Naive thymus-derived CD4-positive, alpha-beta T cell (primary cell): ENCODE measurements at regions of chr4 and their contacts with region 1.

Region 1: GRCh38 chr4:674172-675035 is at the starts of genes ATP5ME and MYL5:
- DNase-seq: peak; percentile 97 to 100 (median 99)
- ATAC-seq: peak; percentile 96
- H3K4me3 ChIP-seq: peak within 1 kb of the TSS; percentile 88
- H3K4me3 Mint-ChIP-seq: peak within 1 kb of the TSS; percentile 84 to 92 (median 88)
- H3K27ac ChIP-seq: peak within 1 kb of the TSS; percentile 100
- H3K27ac Mint-ChIP-seq: peak within 1 kb of the TSS; percentile 80 to 91 (median 89)
- H3K4me1 ChIP-seq: peaks cover 7 to 16% of the 10 kb centered on the region in 2 donors
- H3K4me1 Mint-ChIP-seq: peaks cover 7 to 15% (median 8%) of the 10 kb centered on the region in 7 donors
- H3K27me3 ChIP-seq: no peaks in the 10 kb centered on the region
- H3K27me3 Mint-ChIP-seq: no peaks in the 10 kb centered on the region
- total RNA-seq, gene ATP5ME: 115 to 183 (median 123) TPM
- total RNA-seq, gene MYL5: 19.9 to 32.7 (median 23.8) TPM

Region 2: DNA sequence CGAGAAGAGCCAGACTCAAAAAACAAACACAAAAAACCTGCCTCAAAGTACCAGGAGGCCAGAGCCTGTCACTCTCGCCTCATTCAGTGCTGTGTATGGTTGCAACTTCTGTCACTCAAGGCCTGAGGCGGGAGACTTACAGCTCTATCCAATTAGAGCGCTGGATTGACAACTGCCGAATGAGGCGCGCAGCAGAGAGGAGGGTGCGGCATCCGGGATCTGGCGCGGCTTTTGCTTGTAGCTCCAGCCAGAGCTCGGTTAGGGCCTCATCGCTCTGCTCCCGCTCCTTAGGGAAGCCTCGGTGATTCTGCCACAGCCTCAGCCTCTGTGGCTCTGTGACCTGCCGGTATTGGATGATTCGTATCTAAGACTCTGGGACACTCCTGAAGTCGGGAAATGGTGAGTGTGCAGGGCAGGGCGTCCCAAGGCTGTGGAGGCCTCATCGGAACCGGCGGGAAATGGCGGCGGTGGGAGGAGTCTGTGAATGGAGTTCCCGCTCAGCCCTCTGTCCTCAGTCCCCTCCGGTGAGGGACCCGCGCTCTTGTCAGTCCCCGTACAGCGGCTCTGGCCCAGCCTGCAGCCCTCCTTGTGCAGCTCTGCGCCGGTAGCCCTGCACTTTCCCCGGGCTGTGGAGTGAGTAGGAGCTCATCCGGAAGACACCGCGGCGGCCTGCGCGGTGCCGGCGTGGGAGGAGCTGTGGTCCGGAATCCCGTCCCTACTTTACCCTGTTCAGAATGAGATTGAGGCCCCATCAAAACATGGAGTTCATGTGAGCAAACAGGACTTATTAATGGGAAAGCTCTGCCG is 549.9 kb before region 1 on chr4 and contains the start of gene ZNF718:
- CTCF ChIA-PET with region 1: no interaction called
- POLR2A ChIA-PET with region 1: interaction called, 3 read pairs
- intact Hi-C with region 1: loop called (anchors 5 kb)
- DNase-seq: peak; percentile 17 to 94 (median 90)
- ATAC-seq: peak; percentile 93
- H3K4me3 ChIP-seq: peak within 1 kb of the TSS; percentile 89
- H3K4me3 Mint-ChIP-seq: peak within 1 kb of the TSS; percentile 91 to 100 (median 98)
- H3K27ac ChIP-seq: peak within 1 kb of the TSS; percentile 94
- H3K27ac Mint-ChIP-seq: peak within 1 kb of the TSS; percentile 93 to 100 (median 99)
- H3K4me1 ChIP-seq: peaks cover 22 to 30% of the 10 kb centered on the region in 2 donors
- H3K4me1 Mint-ChIP-seq: peaks cover 21 to 52% (median 42%) of the 10 kb centered on the region in 7 donors
- H3K27me3 ChIP-seq: no peaks in the 10 kb centered on the region
- H3K27me3 Mint-ChIP-seq: no peaks in the 10 kb centered on the region
- total RNA-seq, gene ZNF718: 2.4 to 12.3 (median 10.0) TPM

Region 3: GRCh38 chr4:337143-337931 is 337.1 kb before region 1 on chr4 and contains the start of gene ZNF141:
- CTCF ChIA-PET with region 1: no interaction called
- POLR2A ChIA-PET with region 1: interaction called, 4 read pairs
- intact Hi-C with region 1: loop called (anchors 1 to 2 kb)
- DNase-seq: peak; percentile 74 to 95 (median 93)
- ATAC-seq: peak; percentile 93
- H3K4me3 ChIP-seq: peak within 1 kb of the TSS; percentile 91
- H3K4me3 Mint-ChIP-seq: peak within 1 kb of the TSS; percentile 93 to 100 (median 99)
- H3K27ac ChIP-seq: peak within 1 kb of the TSS; percentile 85
- H3K27ac Mint-ChIP-seq: peak within 1 kb of the TSS; percentile 95 to 100 (median 99)
- H3K4me1 ChIP-seq: peaks cover 9 to 10% of the 10 kb centered on the region in 2 donors
- H3K4me1 Mint-ChIP-seq: peaks cover 11 to 46% (median 41%) of the 10 kb centered on the region in 7 donors
- H3K27me3 ChIP-seq: no peaks in the 10 kb centered on the region
- H3K27me3 Mint-ChIP-seq: peaks cover 0 to 6% (median 0%) of the 10 kb centered on the region in 5 donors
- total RNA-seq, gene ZNF141: 19.7 to 76.1 (median 29.0) TPM

Region 4: DNA sequence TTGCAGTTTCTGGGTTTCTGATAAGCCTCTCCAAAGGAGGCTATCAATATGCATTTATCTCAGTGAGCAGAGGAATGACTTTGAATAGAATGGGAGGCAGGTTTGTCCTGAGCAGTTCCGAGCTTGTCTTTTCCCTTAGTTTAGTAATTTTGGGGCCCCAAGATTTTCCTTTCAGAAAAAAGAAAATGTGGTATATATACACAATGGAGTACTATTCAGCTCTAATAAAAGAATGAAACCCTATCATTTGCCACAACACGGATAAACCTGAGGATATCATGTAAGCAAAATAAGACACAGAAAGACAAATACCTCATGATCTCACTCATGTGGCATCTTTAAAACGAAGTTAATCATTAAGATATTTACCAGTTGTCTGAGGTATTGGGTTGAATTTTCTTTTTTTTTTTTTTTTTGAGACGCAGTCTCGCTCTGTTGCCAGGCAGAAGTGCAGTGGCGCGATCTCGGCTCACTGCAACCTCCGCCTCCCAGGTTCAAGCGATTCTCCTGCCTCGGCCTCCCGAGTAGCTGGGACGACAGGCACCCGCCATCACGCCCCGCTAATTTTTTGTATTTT is 176.0 kb before region 1 on chr4:
- CTCF ChIA-PET with region 1: no interaction called
- POLR2A ChIA-PET with region 1: interaction called, 3 read pairs
- intact Hi-C with region 1: loop called (anchors 1 to 2 kb)
- DNase-seq: no peak
- ATAC-seq: peak; percentile 60
- H3K4me3 ChIP-seq: peak overlapping the region; percentile 96
- H3K4me3 Mint-ChIP-seq: peak overlapping the region; percentile 90 to 97 (median 94)
- H3K27ac ChIP-seq: peak overlapping the region; percentile 94
- H3K27ac Mint-ChIP-seq: peak overlapping the region; percentile 91 to 98 (median 97)
- H3K4me1 ChIP-seq: peaks cover 13 to 16% of the 10 kb centered on the region in 2 donors
- H3K4me1 Mint-ChIP-seq: peaks cover 19 to 53% (median 44%) of the 10 kb centered on the region in 7 donors
- H3K27me3 ChIP-seq: no peaks in the 10 kb centered on the region
- H3K27me3 Mint-ChIP-seq: no peaks in the 10 kb centered on the region

Region 5: GRCh38 chr4:575281-576141 is 98.9 kb before region 1 on chr4:
- CTCF ChIA-PET with region 1: no interaction called
- POLR2A ChIA-PET with region 1: no interaction called
- intact Hi-C with region 1: no loop called
- DNase-seq: peak in 1 of 9 donors; percentile 11
- ATAC-seq: peak; percentile 37
- H3K4me3 ChIP-seq: no peak overlapping the region
- H3K4me3 Mint-ChIP-seq: peak overlapping the region in 1 of 10 donors; percentile 23
- H3K27ac ChIP-seq: no peak overlapping the region
- H3K27ac Mint-ChIP-seq: no peak overlapping the region
- H3K4me1 ChIP-seq: no peaks in the 10 kb centered on the region
- H3K4me1 Mint-ChIP-seq: peaks cover 5 to 18% (median 13%) of the 10 kb centered on the region in 7 donors
- H3K27me3 ChIP-seq: peaks cover 0 to 4% of the 10 kb centered on the region in 2 donors
- H3K27me3 Mint-ChIP-seq: peaks cover 53 to 72% (median 68%) of the 10 kb centered on the region in 5 donors

Region 6: GRCh38 chr4:646460-646859 is 27.9 kb before region 1 on chr4:
- CTCF ChIA-PET with region 1: no interaction called
- POLR2A ChIA-PET with region 1: no interaction called
- intact Hi-C with region 1: no loop called
- DNase-seq: peak in 2 of 9 donors; percentile 14 to 17
- ATAC-seq: no peak
- H3K4me3 ChIP-seq: no peak overlapping the region
- H3K4me3 Mint-ChIP-seq: peak overlapping the region; percentile 63 to 91 (median 76)
- H3K27ac ChIP-seq: no peak overlapping the region
- H3K27ac Mint-ChIP-seq: peak overlapping the region in 5 of 9 donors; percentile 28 to 76 (median 49)
- H3K4me1 ChIP-seq: no peaks in the 10 kb centered on the region
- H3K4me1 Mint-ChIP-seq: peaks cover 0 to 8% (median 7%) of the 10 kb centered on the region in 7 donors
- H3K27me3 ChIP-seq: peaks cover 0 to 3% of the 10 kb centered on the region in 2 donors
- H3K27me3 Mint-ChIP-seq: peaks cover 0 to 31% (median 24%) of the 10 kb centered on the region in 5 donors

Region 7: GRCh38 chr4:705278-706082 is 31.1 kb after region 1 on chr4 and contains the start of gene PCGF3:
- CTCF ChIA-PET with region 1: no interaction called
- POLR2A ChIA-PET with region 1: interaction called, 4 read pairs
- intact Hi-C with region 1: loop called (anchors 1 kb)
- DNase-seq: peak; percentile 89 to 99 (median 92)
- ATAC-seq: peak; percentile 99
- H3K4me3 ChIP-seq: peak within 1 kb of the TSS; percentile 84
- H3K4me3 Mint-ChIP-seq: peak within 1 kb of the TSS; percentile 68 to 96 (median 83)
- H3K27ac ChIP-seq: peak within 1 kb of the TSS; percentile 96
- H3K27ac Mint-ChIP-seq: peak within 1 kb of the TSS; percentile 40 to 93 (median 59)
- H3K4me1 ChIP-seq: peaks cover 9 to 11% of the 10 kb centered on the region in 2 donors
- H3K4me1 Mint-ChIP-seq: peaks cover 21 to 30% (median 23%) of the 10 kb centered on the region in 7 donors
- H3K27me3 ChIP-seq: no peaks in the 10 kb centered on the region
- H3K27me3 Mint-ChIP-seq: no peaks in the 10 kb centered on the region
- total RNA-seq, gene PCGF3: 32.7 to 66.8 (median 42.3) TPM

Region 8: DNA sequence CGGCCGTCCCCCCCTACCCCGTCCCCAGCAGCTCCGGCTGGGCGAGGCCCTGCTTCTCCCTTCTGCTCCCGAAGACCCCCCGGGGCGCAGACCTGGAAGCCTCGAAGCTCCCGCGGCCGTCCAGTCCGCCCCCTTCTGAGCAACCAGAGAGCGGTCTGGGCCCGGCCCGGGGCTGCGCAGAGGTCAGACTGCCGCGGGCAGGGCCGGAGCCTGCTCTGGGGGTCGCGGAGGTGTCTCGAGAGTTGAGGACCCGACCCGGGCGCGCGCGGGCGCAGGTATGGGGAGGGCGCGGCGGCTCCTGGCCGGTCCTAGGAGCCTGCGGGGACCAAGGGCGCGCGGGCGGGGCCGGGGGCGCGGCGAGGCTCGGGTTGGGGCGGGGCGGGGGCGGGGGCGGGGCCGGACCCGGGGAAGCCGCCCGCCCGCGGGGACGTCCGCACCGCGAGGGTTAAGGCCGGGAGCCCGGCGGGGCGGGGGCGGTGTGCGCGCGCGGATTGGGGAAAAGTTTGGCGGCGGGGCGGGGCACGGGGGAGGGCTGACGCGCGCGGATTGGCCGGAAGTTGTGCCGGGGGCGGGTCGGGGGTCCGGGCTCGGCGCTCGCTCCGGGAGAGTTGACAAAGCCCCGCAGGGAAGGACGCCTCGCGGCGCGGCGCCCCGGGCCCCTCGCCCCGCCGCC is 336.8 kb after region 1 on chr4 and contains the start of gene FGFRL1:
- CTCF ChIA-PET with region 1: no interaction called
- POLR2A ChIA-PET with region 1: no interaction called
- intact Hi-C with region 1: loop called in 1 of 2 experiments (anchors 2 kb)
- DNase-seq: peak; percentile 78 to 95 (median 87)
- ATAC-seq: peak; percentile 78
- H3K4me3 ChIP-seq: peak within 1 kb of the TSS; percentile 77
- H3K4me3 Mint-ChIP-seq: peak within 1 kb of the TSS; percentile 86 to 97 (median 89)
- H3K27ac ChIP-seq: peak within 1 kb of the TSS; percentile 83
- H3K27ac Mint-ChIP-seq: peak within 1 kb of the TSS; percentile 76 to 96 (median 92)
- H3K4me1 ChIP-seq: peaks cover 0 to 10% of the 10 kb centered on the region in 2 donors
- H3K4me1 Mint-ChIP-seq: peaks cover 15 to 21% (median 18%) of the 10 kb centered on the region in 7 donors
- H3K27me3 ChIP-seq: no peaks in the 10 kb centered on the region
- H3K27me3 Mint-ChIP-seq: peaks cover 24 to 31% (median 27%) of the 10 kb centered on the region in 5 donors
- total RNA-seq, gene FGFRL1: 10.6 to 28.1 (median 22.0) TPM

Region 9: DNA sequence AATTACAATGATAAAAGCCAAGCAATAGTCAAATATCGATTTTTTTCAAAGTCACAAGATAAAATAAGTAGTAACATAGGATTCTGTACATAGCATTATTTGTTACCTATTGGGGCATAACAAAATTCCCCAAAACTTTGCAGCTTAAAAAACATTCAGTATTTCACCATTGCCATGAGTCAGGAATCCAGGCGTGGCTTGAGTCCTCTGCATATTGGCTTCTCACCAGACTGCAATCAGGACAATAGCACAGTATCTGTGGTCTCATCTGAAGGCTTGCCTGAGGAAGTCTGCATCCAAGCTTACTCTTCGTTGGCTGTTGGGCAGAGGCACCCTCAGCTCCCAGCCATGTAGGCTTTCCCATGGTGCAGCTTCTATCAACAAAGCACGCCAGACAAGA is 580.7 kb after region 1 on chr4:
- CTCF ChIA-PET with region 1: no interaction called
- POLR2A ChIA-PET with region 1: no interaction called
- intact Hi-C with region 1: no loop called
- DNase-seq: no peak
- ATAC-seq: no peak
- H3K4me3 ChIP-seq: no peak overlapping the region
- H3K4me3 Mint-ChIP-seq: peak overlapping the region in 1 of 10 donors; percentile 14
- H3K27ac ChIP-seq: no peak overlapping the region
- H3K27ac Mint-ChIP-seq: peak overlapping the region in 5 of 9 donors; percentile 54 to 93 (median 89)
- H3K4me1 ChIP-seq: peaks cover 23 to 32% of the 10 kb centered on the region in 2 donors
- H3K4me1 Mint-ChIP-seq: peaks cover 39 to 73% (median 63%) of the 10 kb centered on the region in 7 donors
- H3K27me3 ChIP-seq: no peaks in the 10 kb centered on the region
- H3K27me3 Mint-ChIP-seq: no peaks in the 10 kb centered on the region